ENCODE measurements at regions of chr3 and their contacts with region 1.

Region 1: DNA sequence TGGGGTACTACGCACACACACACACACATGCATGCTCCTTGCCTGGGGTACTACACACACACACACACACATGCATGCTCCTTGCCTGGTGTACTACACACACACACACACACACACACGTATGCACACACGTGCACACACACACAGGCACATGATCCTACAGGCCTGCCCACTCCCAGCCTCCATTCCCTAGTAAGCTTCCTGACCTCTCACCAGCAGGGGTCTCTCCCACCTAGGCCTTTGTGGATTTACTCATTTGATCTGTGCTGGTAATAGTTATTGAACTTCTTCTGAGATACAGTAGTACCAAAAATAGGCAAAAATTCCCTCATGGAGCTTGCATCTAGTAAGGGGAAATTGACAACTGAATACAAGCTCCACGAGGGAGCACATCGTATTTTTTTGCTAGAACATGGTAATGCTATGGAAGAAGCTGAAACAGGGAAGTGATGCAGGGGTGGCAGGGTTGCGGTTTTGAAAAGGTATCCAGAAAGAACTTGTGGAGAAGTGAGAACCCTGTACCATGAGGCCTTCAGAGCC is 19.1 kb downstream of the TTC21A start:
- DNase-seq: peak; percentile 62 to 78 (median 66)
- ATAC-seq: peak; percentile 92
- H3K4me3 ChIP-seq: no peak overlapping the region
- H3K27ac ChIP-seq: no peak overlapping the region
- H3K4me1 ChIP-seq: no peaks in the 10 kb centered on the region; a peak in 1 of 5 replicates
- H3K27me3 ChIP-seq: no peaks in the 10 kb centered on the region
- CTCF ChIP-seq: peak; percentile 85 to 96 (median 89)
- EP300 ChIP-seq: no peak
- POLR2A ChIP-seq: no peak
- RAD21 ChIP-seq: peak; percentile 91 to 98

Region 2: DNA sequence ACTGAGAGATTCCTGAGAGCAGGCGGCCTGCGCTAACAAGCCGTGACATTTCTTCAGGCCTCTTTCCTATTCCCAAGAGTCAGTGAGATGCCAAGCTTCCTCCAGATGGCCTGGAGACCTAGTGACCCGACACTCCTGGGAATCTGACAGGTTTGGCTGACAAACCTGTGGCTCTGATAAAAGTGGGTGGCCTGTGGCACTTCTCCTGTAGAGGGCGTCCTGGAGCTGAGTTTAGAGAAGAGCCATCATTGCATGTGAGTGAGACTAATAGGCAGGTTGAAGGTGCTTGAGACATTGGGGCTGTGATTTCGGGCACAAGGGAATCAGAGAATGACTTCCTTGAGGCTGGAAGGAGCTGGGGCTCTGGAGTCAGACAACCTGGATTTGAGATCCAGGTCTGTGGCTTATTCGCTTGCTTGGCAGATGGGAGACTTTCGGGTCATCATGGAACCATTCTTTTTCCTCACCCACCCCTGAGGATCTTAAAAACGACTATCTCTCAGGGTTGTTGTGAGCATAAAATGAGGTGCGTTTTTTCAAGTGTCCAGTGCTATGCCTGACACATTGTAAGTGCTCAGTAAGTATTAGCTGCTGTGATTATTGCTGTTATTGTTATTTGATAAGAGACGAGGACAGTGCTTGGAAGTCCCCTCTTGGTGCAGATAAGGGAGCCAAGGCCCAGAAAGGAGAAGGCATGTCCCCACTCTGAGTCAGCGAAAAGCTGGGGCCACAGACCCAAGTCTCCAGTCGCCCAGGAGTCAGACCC is 387.8 kb before region 1 on chr3:
- CTCF ChIA-PET with region 1: no interaction called
- POLR2A ChIA-PET with region 1: no interaction called
- in situ Hi-C with region 1: no loop called
- intact Hi-C with region 1: no loop called
- DNase-seq: peak; percentile 67 to 75 (median 68)
- ATAC-seq: peak; percentile 92
- H3K4me3 ChIP-seq: no peak overlapping the region
- H3K27ac ChIP-seq: no peak overlapping the region
- H3K4me1 ChIP-seq: peaks cover 4 to 11% of the 10 kb centered on the region in 2 experiments; a peak in 3 of 5 replicates
- H3K27me3 ChIP-seq: peaks cover 2 to 8% of the 10 kb centered on the region in 2 experiments; a peak in 4 of 5 replicates
- CTCF ChIP-seq: peak; percentile 77 to 84 (median 84)
- EP300 ChIP-seq: no peak
- POLR2A ChIP-seq: no peak
- RAD21 ChIP-seq: peak; percentile 45 to 74

Region 3: GRCh38 chr3:39065197-39065596 is 61.4 kb before region 1 on chr3:
- CTCF ChIA-PET with region 1: no interaction called
- POLR2A ChIA-PET with region 1: no interaction called
- in situ Hi-C with region 1: no loop called
- intact Hi-C with region 1: no loop called
- DNase-seq: peak in 2 of 4 experiments; percentile 71 to 73
- ATAC-seq: peak; percentile 100
- H3K4me3 ChIP-seq: no peak overlapping the region
- H3K27ac ChIP-seq: no peak overlapping the region; the same call in 2 of the 3 replicates
- H3K4me1 ChIP-seq: no peaks in the 10 kb centered on the region; a peak in 1 of 5 replicates
- H3K27me3 ChIP-seq: no peaks in the 10 kb centered on the region
- CTCF ChIP-seq: peak; percentile 68 to 75 (median 72)
- EP300 ChIP-seq: no peak
- POLR2A ChIP-seq: no peak
- RAD21 ChIP-seq: peak in 1 of 2 experiments; percentile 40; a peak in 2 of 4 replicates

Region 4: DNA sequence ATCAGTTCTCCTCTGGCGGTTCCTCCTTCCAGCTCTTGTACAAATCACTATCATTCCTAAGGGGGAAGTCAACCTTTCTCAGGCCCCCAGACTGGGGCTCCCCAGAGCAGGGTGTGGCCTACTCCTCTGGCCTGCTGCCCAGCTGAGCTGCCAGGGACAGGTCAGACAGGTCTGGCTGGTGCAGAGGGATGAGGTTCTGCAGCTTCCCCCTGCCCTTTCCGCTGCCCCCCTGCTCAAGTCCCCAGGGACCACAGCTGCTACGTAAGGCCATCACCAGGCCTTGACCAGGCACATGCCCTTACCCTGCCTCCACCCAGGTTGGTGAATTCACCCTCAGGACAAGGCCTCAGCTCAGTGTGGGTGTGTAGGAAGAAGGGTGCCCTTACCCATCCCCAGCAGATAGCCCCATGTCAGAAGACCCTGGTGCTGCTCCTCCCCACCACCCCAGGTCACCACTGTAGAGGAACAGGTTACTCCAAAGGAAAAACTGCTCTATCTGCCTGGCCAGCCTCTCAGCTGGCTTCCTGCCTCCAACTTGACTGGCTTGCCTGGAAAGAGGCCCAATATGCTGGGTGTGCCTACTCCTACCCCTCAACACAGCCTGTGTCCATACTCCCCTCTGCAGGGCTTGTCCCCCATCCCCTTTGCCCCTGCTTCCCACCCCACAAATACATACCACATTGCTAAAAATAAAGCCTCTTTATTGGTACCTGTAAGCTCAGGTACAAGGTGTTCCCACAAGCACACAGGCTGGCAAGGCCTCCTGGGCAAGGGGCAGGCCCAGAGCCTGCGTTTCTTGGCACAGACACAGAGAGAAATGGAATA is 14.8 kb after region 1 on chr3:
- CTCF ChIA-PET with region 1: no interaction called
- POLR2A ChIA-PET with region 1: interaction called, 21 read pairs
- in situ Hi-C with region 1: no loop called
- intact Hi-C with region 1: no loop called
- DNase-seq: peak in 2 of 4 experiments; percentile 34 to 40
- ATAC-seq: peak; percentile 69
- H3K4me3 ChIP-seq: no peak overlapping the region
- H3K27ac ChIP-seq: no peak overlapping the region
- H3K4me1 ChIP-seq: peaks cover 8 to 20% of the 10 kb centered on the region in 2 experiments; a peak in 4 of 5 replicates
- H3K27me3 ChIP-seq: no peaks in the 10 kb centered on the region
- CTCF ChIP-seq: no peak
- EP300 ChIP-seq: no peak
- POLR2A ChIP-seq: peak; percentile 53
- RAD21 ChIP-seq: no peak

Region 5: GRCh38 chr3:39183211-39184080 is 56.8 kb after region 1 on chr3:
- CTCF ChIA-PET with region 1: interaction called, 10 read pairs
- POLR2A ChIA-PET with region 1: interaction called, 5 read pairs
- in situ Hi-C with region 1: loop called (anchors 5 kb)
- intact Hi-C with region 1: loop called (anchors 1 kb)
- DNase-seq: no peak
- ATAC-seq: no peak
- H3K4me3 ChIP-seq: no peak overlapping the region
- H3K27ac ChIP-seq: no peak overlapping the region
- H3K4me1 ChIP-seq: peaks cover 25 to 49% of the 10 kb centered on the region in 2 experiments
- H3K27me3 ChIP-seq: peaks cover 6 to 11% of the 10 kb centered on the region in 2 experiments; a peak in 2 of 5 replicates
- CTCF ChIP-seq: peak in 2 of 3 experiments; percentile 26 to 36; a peak in 2 of 6 replicates
- EP300 ChIP-seq: no peak
- POLR2A ChIP-seq: no peak
- RAD21 ChIP-seq: peak in 1 of 2 experiments; percentile 33; a peak in 2 of 4 replicates

Region 6: DNA sequence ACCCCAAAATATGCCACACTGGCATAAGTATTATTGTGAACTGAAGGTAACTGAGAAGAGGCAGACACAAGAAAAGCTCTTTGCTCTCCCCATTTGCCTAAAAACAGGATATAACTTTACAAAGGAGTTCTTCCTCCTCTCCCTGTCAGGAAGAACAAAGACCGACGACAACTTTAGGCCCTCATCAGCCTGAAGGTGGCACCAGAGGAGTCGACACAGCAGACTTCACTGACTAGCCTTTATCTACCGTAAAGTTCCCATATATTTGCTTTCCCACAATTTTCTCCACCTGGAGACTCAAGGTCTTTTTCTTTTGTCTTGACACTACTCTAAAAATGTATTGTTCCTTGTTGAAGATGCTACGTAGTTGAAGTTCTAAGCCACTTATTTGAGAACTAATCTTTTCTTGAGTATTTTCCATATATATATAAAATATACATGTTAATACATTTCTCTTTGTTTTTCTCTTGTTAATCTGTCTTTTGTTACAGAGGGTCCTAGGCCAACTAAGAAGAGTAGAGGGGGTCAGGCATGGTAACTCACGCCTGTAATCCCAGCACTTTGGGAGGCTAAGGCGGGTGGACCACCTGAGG is 82.0 kb after region 1 on chr3:
- CTCF ChIA-PET with region 1: no interaction called
- POLR2A ChIA-PET with region 1: no interaction called
- in situ Hi-C with region 1: no loop called
- intact Hi-C with region 1: loop called (anchors 5 kb)
- DNase-seq: peak; percentile 64 to 76 (median 70)
- ATAC-seq: peak; percentile 95
- H3K4me3 ChIP-seq: no peak overlapping the region
- H3K27ac ChIP-seq: no peak overlapping the region
- H3K4me1 ChIP-seq: no peaks in the 10 kb centered on the region
- H3K27me3 ChIP-seq: peaks cover 34 to 37% of the 10 kb centered on the region in 2 experiments
- CTCF ChIP-seq: peak; percentile 71 to 88 (median 81)
- EP300 ChIP-seq: no peak
- POLR2A ChIP-seq: no peak
- RAD21 ChIP-seq: peak; percentile 85 to 88

Region 7: DNA sequence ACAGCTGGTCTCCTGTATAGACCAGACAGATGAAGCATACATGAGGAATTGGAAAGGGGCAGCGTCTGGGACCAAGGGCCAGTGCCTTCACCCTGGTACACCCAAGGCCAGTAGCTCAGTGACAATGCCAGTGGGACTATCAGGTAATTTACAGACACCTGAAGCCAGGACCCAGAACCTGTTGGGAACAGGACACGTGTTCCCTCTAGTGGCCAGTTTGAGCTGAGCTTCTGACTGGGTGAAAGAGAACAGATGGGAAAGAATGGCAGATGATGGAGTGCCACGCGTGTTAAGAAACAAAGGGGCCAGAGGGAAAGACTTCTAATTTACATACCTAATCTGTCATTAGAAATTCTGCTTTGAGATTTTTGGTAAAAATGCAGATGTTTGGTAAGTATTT is 251.5 kb after region 1 on chr3:
- CTCF ChIA-PET with region 1: interaction called, 3 read pairs
- POLR2A ChIA-PET with region 1: no interaction called
- in situ Hi-C with region 1: loop called (anchors 10 kb)
- intact Hi-C with region 1: loop called (anchors 5 kb)
- DNase-seq: peak; percentile 59 to 80 (median 66)
- ATAC-seq: peak; percentile 88
- H3K4me3 ChIP-seq: no peak overlapping the region
- H3K27ac ChIP-seq: no peak overlapping the region
- H3K4me1 ChIP-seq: peaks cover 0 to 4% of the 10 kb centered on the region in 2 experiments; a peak in 3 of 5 replicates
- H3K27me3 ChIP-seq: peaks cover 33 to 38% of the 10 kb centered on the region in 2 experiments
- CTCF ChIP-seq: peak; percentile 79 to 93 (median 87)
- EP300 ChIP-seq: no peak
- POLR2A ChIP-seq: no peak
- RAD21 ChIP-seq: peak; percentile 84 to 92

Measured in K562 (cell line).